ENCODE measurements at regions of chr7 and their contacts with region 1.

Region 1: DNA sequence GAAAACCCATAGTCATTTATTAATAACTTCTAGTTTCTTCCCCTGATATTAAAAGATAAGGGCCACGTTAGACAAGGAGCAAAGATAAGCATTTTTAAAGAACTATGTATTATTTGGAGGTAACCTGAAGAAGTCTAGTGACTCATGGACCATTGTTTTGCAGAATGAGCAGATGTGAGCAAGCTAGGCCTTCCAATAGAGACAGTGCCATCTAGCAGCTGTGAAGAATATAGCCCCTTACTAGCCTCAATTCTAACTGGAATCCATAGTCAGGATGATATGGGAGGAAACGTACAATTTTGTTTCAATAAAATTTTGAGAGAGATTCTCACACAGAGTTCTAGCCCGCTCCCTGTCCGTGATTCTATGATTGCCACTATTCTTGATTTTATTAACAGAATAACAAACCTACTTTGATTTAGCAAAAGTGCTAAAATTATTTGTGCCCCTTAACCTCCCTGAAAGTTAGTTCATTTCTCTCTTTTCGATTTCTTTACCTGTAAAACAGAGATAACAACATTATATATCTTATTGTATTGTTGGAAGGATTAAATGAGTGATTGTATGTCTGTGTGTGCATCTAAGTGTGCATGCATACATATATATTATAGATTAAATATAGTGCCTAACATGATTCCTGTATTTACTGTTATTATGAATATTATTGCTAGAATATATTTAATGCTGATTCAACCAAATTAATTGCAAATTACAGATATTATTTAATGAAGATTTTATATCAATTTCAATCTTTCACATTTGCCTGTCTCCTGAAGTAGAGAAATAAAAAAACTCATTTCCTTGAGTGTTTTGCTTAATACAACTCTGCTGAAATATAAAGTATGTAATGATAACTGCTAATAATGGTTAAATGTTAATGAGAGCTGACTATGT is 22.7 kb downstream of the FAM237B start:
- DNase-seq: no peak
- ATAC-seq: peak; percentile 67

Region 2: GRCh38 chr7:90211391-90212148 is 86.8 kb before region 1 on chr7 and contains the start of gene STEAP2:
- intact Hi-C with region 1: no loop called
- DNase-seq: peak; percentile 94
- ATAC-seq: peak; percentile 99
- total RNA-seq, gene STEAP2: 15.1 TPM

Region 3: GRCh38 chr7:90424720-90425119 is 126.3 kb after region 1 on chr7:
- intact Hi-C with region 1: loop called (anchors 10 kb)
- DNase-seq: no peak
- ATAC-seq: no peak

Measured in left ventricle myocardium superior (tissue), 1 donor.